Dendritic cell treated with granulocyte-macrophage colony-stimulating factor and Interleukin-4, amounts not matched to agents 40 ng/mL and 50 ng/mL, for 4 days (primary cell): ENCODE measurements at regions of chr19 and their contacts with region 1.

Region 1: GRCh38 chr19:40465557-40466150 is at the start of gene BLVRB:
- H3K4me3 Mint-ChIP-seq: peak within 1 kb of the TSS; percentile 94
- H3K27ac Mint-ChIP-seq: peak within 1 kb of the TSS; percentile 98
- H3K4me1 Mint-ChIP-seq: peaks cover 58% of the 10 kb centered on the region
- H3K27me3 Mint-ChIP-seq: peaks cover 27% of the 10 kb centered on the region

Region 2: DNA sequence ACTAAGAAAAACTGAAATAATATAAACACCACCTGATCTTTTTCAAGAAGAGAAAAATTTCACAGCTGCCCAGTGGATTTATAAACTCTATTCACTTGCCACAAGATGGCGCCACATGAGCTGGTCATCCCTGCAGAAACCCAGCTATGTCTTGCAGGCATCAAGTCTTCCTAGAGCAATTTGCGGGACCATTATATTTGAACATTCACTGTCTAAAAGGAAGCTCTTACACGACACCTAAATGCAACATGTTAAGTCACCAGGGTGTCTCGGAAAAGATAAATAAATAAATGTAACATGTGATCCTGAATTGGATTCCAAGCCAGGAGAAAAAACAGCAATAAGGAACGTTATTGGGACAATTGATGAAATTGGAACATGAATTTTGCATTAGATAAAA is 160.3 kb before region 1 on chr19:
- intact Hi-C with region 1: loop called (anchors 10 kb)
- H3K4me3 Mint-ChIP-seq: no peak overlapping the region
- H3K27ac Mint-ChIP-seq: no peak overlapping the region
- H3K4me1 Mint-ChIP-seq: peaks cover 16% of the 10 kb centered on the region
- H3K27me3 Mint-ChIP-seq: no peaks in the 10 kb centered on the region

Region 3: GRCh38 chr19:40425450-40426287 is 40.0 kb before region 1 on chr19 and contains the start of gene SERTAD1:
- intact Hi-C with region 1: loop called (anchors 5 kb)
- H3K4me3 Mint-ChIP-seq: peak within 1 kb of the TSS; percentile 88
- H3K27ac Mint-ChIP-seq: peak within 1 kb of the TSS; percentile 88
- H3K4me1 Mint-ChIP-seq: peaks cover 24% of the 10 kb centered on the region
- H3K27me3 Mint-ChIP-seq: no peaks in the 10 kb centered on the region

Region 4: GRCh38 chr19:40444192-40445028 is 21.2 kb before region 1 on chr19 and contains the start of gene SERTAD3:
- intact Hi-C with region 1: loop called (anchors 2 kb)
- H3K4me3 Mint-ChIP-seq: peak within 1 kb of the TSS; percentile 97
- H3K27ac Mint-ChIP-seq: peak within 1 kb of the TSS; percentile 98
- H3K4me1 Mint-ChIP-seq: peaks cover 30% of the 10 kb centered on the region
- H3K27me3 Mint-ChIP-seq: no peaks in the 10 kb centered on the region

Region 5: DNA sequence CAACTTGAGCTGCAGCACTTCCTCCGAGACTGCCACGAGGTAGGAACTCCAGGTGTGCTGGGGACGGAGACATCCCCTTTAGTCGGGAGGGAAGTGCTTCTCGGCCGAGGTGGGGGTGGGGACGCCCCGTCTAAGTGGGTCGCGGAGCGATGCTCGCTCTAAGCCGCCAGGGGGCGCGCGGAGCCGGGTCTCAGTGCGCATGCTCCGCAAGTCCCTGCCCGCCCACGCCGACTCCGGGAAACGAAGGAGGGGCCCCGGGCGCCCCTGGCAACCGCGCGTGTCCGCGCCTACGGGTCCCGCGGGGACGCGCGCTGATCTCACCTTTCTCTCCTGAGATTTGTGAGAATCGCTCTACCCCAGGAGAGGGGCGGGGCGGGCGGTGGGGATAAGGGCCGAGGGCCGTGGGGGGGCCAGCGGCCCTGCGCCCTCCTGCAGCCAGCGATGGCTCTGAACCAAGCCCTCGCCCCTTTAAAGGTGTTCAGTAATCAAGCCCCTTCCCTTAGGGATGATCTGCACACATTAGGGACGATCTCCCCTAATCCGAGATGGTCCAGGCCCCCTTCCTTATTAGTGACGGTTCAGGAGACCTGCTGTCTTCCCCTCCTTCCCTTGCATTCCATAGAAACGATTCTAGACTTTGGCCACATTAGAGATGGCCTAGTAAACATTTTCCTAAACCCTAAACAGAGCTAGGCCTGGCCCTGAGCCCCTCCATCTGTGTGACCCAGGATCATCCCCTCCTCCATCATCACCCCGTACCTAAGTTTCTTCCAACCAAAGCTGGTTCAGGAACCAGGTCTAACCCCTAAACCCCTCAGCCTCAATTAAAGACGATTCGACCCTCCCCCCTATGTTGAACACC is 63.7 kb after region 1 on chr19:
- intact Hi-C with region 1: loop called (anchors 5 kb)
- H3K4me3 Mint-ChIP-seq: peak overlapping the region; percentile 55
- H3K27ac Mint-ChIP-seq: no peak overlapping the region
- H3K4me1 Mint-ChIP-seq: peaks cover 15% of the 10 kb centered on the region
- H3K27me3 Mint-ChIP-seq: peaks cover 72% of the 10 kb centered on the region

Region 6: DNA sequence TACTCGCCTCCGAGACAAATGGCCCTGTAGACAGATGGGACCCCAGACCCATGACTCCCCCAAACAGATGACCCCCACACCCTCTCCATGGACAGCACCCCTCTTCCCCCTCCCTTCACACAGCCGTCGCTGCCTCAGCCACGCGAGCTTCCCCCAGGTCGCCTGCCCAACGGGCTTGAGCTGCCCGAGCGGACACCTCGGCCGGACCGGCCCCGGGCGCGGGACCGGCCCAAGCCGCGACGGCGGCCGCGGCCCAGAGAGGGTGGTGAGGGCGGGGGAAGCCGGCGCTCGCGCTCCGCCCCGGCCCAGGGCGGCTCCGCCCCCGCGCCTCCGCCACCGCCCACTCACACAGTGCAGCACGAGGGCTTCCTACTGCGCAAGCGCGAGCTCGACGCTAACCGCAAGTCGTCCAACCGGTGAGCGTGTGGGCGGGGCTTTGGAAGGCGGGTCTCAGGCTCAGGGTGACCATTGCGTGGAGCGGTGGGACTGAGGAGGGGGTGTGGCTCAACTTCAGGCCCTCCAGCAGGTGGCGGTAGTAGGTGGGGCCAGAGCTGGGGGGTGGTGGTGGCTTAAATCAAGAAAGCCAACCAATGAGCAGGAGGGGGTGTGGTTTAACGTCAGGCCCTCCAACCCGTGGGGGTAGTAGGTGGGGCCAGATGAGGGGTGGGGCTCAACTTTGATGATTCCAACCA is 104.8 kb after region 1 on chr19:
- intact Hi-C with region 1: loop called (anchors 10 kb)
- H3K4me3 Mint-ChIP-seq: peak overlapping the region; percentile 68
- H3K27ac Mint-ChIP-seq: peak overlapping the region; percentile 47
- H3K4me1 Mint-ChIP-seq: peaks cover 35% of the 10 kb centered on the region
- H3K27me3 Mint-ChIP-seq: peaks cover 42% of the 10 kb centered on the region

Region 7: GRCh38 chr19:40603389-40604135 is 137.9 kb after region 1 on chr19:
- intact Hi-C with region 1: loop called (anchors 5 kb)
- H3K4me3 Mint-ChIP-seq: peak overlapping the region; percentile 82
- H3K27ac Mint-ChIP-seq: peak overlapping the region; percentile 49
- H3K4me1 Mint-ChIP-seq: peaks cover 83% of the 10 kb centered on the region
- H3K27me3 Mint-ChIP-seq: peaks cover 95% of the 10 kb centered on the region